Activated CD4-positive, alpha-beta T cell treated with anti-CD3 and anti-CD28 coated beads for 36 hours (primary cell): ENCODE measurements at regions of chr13 and their contacts with region 1.

Region 1: DNA sequence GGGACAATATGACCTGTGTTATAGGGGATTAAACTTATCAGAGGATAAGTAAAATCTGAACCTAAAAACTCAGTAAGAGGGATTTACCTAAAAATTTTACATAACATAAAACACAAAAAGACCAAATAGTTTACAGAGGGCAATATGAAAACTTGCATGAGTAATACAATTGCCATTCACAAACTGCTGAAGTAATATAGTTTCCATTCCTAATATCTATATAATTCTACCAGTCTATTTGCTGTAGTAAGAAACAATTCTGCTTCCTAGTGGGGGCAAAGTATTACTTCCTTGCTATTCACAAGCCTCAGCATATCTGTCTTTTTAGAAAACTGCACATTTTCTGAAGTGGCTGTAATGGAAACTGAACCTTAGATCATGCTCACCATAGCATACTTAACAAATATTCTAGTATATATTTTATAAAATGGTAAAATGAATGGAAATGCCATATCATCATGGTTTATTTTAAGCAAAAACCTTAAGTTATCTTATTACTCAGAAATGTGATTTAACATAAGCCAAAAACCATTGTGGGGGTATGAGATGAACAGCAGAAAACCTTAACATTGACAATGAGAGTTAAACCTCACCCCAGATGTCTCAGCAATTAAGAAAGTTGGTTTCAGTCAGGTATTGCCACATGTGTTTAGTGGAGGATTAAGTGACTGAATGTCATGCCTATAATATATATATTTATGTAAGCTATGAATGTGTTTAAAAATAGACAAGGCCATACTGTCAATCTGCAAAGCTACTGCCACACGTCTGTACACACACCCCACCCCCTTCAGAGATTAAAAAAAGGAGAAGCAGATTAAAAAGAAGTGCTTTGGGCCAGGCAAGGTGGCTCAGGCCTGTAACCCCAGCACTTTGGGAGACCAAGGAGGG is 136.8 kb downstream of the MIPEP start:
- DNase-seq: no peak
- ATAC-seq: peak; percentile 78
- H3K4me3 Mint-ChIP-seq: no peak overlapping the region
- H3K27ac Mint-ChIP-seq: no peak overlapping the region
- H3K4me1 Mint-ChIP-seq: peaks cover 44% of the 10 kb centered on the region
- H3K27me3 Mint-ChIP-seq: peaks cover 3% of the 10 kb centered on the region

Region 2: DNA sequence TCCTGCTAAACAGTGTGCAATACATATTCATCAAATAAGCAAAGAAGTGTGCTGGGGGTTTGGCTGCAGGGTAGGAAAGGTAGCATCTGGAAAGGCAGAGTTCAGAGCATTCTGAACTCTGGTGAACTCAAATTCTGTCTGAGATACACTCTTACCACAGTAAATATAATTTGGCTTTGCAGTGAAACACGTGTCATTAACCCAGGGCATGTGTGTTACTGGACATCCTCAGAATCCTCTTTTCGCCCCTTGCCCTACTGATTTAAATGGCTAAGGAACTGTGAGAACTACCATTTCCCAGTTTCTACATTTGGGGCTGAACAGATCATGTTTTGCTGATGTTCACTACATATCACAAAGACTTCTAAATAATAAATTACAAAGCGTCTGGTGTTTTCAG is 1134.4 kb before region 1 on chr13:
- CTCF ChIA-PET with region 1: no interaction called
- POLR2A ChIA-PET with region 1: no interaction called
- intact Hi-C with region 1: no loop called
- DNase-seq: no peak
- ATAC-seq: no peak
- H3K4me3 Mint-ChIP-seq: no peak overlapping the region
- H3K27ac Mint-ChIP-seq: no peak overlapping the region
- H3K4me1 Mint-ChIP-seq: no peaks in the 10 kb centered on the region
- H3K27me3 Mint-ChIP-seq: no peaks in the 10 kb centered on the region

Region 3: GRCh38 chr13:23637829-23638228 is 114.5 kb before region 1 on chr13:
- CTCF ChIA-PET with region 1: no interaction called
- POLR2A ChIA-PET with region 1: no interaction called
- intact Hi-C with region 1: no loop called
- DNase-seq: no peak
- ATAC-seq: no peak
- H3K4me3 Mint-ChIP-seq: no peak overlapping the region
- H3K27ac Mint-ChIP-seq: no peak overlapping the region
- H3K4me1 Mint-ChIP-seq: no peaks in the 10 kb centered on the region
- H3K27me3 Mint-ChIP-seq: no peaks in the 10 kb centered on the region

Region 4: GRCh38 chr13:23674795-23675640 is 77.3 kb before region 1 on chr13:
- CTCF ChIA-PET with region 1: no interaction called
- POLR2A ChIA-PET with region 1: no interaction called
- intact Hi-C with region 1: loop called in 1 of 2 experiments (anchors 2 kb)
- DNase-seq: peak; percentile 43
- ATAC-seq: peak; percentile 66
- H3K4me3 Mint-ChIP-seq: no peak overlapping the region
- H3K27ac Mint-ChIP-seq: no peak overlapping the region
- H3K4me1 Mint-ChIP-seq: peaks cover 21% of the 10 kb centered on the region
- H3K27me3 Mint-ChIP-seq: peaks cover 4% of the 10 kb centered on the region

Region 5: GRCh38 chr13:23730251-23730650 is 22.1 kb before region 1 on chr13:
- CTCF ChIA-PET with region 1: no interaction called
- POLR2A ChIA-PET with region 1: no interaction called
- intact Hi-C with region 1: no loop called
- DNase-seq: no peak
- ATAC-seq: no peak
- H3K4me3 Mint-ChIP-seq: no peak overlapping the region
- H3K27ac Mint-ChIP-seq: no peak overlapping the region
- H3K4me1 Mint-ChIP-seq: no peaks in the 10 kb centered on the region
- H3K27me3 Mint-ChIP-seq: no peaks in the 10 kb centered on the region

Region 6: DNA sequence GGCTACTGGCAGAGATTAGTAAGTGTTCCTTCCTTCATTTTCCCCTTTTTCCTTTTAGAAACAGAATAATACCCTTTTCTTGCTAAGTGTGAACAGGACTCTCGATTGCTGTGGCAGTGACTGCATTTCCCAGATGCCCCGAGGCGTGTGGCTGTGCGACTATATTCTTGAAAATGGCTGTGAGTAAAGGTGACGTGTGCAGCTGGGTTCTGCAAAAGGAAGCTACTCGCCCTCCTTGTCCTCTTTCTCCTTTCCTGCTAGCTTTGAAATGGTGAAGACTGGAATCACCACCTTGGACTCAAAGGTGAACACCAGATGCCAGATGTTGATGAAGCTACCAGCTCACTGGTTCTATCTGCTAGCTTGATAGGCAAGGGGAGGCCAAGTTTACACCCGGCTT is 15.5 kb after region 1 on chr13:
- CTCF ChIA-PET with region 1: interaction called, 3 read pairs
- POLR2A ChIA-PET with region 1: no interaction called
- intact Hi-C with region 1: loop called in 1 of 2 experiments (anchors 2 kb)
- DNase-seq: no peak
- ATAC-seq: no peak
- H3K4me3 Mint-ChIP-seq: no peak overlapping the region
- H3K27ac Mint-ChIP-seq: no peak overlapping the region
- H3K4me1 Mint-ChIP-seq: peaks cover 6% of the 10 kb centered on the region
- H3K27me3 Mint-ChIP-seq: no peaks in the 10 kb centered on the region

Region 7: GRCh38 chr13:23799945-23800344 is 47.6 kb after region 1 on chr13:
- CTCF ChIA-PET with region 1: no interaction called
- POLR2A ChIA-PET with region 1: no interaction called
- intact Hi-C with region 1: loop called in 1 of 2 experiments (anchors 1 kb)
- DNase-seq: peak; percentile 42
- ATAC-seq: peak; percentile 73
- H3K4me3 Mint-ChIP-seq: no peak overlapping the region
- H3K27ac Mint-ChIP-seq: no peak overlapping the region
- H3K4me1 Mint-ChIP-seq: peaks cover 27% of the 10 kb centered on the region
- H3K27me3 Mint-ChIP-seq: no peaks in the 10 kb centered on the region